Activated CD4-positive, alpha-beta memory T cell treated with anti-CD3 and anti-CD28 coated beads for 36 hours (primary cell): ENCODE measurements at regions of chr1 and their contacts with region 1.

Region 1: DNA sequence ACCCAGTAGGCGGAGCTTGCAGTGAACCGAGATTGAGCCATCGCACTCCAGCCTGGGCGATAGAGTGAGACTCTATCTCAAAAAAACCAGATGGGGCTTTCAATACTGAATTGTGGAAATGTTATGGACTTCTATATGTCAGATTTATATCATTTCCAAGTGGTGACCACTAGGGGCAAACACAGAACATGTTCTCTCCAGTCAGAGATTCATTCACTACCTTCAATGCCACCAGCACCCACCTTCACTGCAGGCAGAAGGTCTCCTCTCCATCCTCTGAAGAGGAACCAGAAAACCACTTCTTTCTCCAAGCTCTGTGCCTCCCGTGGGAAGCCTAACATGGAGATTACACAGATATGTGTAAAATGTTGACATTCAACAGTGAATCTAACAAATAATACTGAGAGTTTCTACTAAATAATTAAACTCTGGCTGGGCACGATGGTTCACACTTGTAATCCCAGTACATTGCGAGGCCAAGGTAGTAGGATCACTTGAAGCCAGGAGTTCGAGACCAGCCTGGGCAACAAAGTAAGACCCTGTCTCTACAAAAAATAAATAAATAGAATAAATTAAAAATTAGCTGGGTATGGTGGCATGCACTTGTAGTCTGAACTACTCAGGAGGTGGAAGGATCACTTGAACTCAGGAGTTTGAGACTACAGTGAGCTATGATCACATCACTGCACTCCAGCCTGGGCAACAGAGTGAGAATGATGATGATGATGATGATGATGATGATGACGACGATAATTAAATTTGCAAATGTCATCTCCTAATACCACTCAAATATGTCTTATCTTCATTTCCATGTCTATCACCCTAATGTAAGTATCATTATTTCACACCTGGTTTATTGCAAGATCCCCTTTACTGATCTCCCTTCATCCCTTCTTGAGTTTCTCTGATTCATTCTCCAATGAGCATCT is 151.1 kb downstream of the ZNF281 start:
- DNase-seq: no peak
- H3K4me3 Mint-ChIP-seq: no peak overlapping the region
- H3K27ac Mint-ChIP-seq: no peak overlapping the region
- H3K4me1 Mint-ChIP-seq: peaks cover 18% of the 10 kb centered on the region
- H3K27me3 Mint-ChIP-seq: peaks cover 9% of the 10 kb centered on the region

Region 2: GRCh38 chr1:200139661-200140250 is 119.0 kb before region 1 on chr1:
- CTCF ChIA-PET with region 1: no interaction called
- POLR2A ChIA-PET with region 1: no interaction called
- intact Hi-C with region 1: loop called (anchors 5 kb)
- DNase-seq: peak; percentile 27
- H3K4me3 Mint-ChIP-seq: no peak overlapping the region
- H3K27ac Mint-ChIP-seq: no peak overlapping the region
- H3K4me1 Mint-ChIP-seq: no peaks in the 10 kb centered on the region
- H3K27me3 Mint-ChIP-seq: no peaks in the 10 kb centered on the region

Region 3: DNA sequence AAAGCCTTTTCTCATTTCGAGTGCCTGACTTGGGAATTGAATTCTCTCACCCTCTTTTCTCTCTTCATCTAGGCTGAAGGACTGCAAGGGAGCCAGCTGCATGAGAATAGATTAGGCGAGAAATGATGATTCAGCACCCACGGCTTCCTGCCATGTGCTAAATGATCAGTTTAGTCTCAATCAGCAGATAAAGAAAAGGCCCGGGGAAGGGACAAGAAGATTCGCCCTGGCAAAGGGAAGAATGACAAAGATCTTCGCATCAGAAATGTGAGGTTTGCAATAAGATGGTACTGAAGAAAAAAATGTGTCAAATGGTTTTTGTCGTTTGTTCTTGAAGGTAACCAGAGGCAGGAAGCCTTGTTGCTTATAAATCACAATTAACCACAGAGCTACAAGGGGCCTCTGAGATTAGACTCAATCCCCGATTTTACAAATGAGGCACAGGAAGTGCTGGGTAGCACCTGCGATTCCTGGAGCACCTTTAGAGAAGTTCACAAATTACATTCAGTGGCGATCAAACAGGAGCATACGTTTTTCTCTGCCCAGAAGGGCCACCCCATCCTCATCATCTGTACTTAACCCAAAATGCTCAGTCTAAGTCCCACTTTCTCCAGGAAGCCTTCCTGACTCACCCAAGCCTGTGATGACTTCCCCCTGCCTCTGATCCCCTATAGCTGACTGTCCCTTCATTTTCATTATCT is 32.3 kb before region 1 on chr1:
- CTCF ChIA-PET with region 1: interaction called, 3 read pairs
- POLR2A ChIA-PET with region 1: no interaction called
- intact Hi-C with region 1: loop called (anchors 2 kb)
- DNase-seq: peak; percentile 61
- H3K4me3 Mint-ChIP-seq: no peak overlapping the region
- H3K27ac Mint-ChIP-seq: peak overlapping the region; percentile 35
- H3K4me1 Mint-ChIP-seq: peaks cover 22% of the 10 kb centered on the region
- H3K27me3 Mint-ChIP-seq: peaks cover 2% of the 10 kb centered on the region

Region 4: DNA sequence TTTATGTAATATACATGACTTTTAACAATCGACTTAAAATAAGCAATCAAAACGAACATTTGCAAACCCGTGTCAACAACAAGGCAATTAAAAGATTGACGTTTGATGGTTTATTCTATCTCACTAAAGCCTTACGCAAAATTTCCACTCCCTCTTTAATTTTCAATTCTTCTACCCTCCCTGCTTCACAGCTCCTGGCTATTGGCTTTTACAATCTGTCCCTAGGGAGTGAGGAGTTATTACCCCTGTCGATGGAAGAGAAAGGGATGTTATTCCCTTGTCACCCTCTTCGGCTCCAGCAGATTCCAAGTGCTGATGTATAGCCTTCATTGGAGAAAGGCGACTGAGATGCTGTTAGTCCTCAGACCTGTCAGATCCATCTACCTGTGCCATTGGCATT is 10.2 kb before region 1 on chr1:
- CTCF ChIA-PET with region 1: no interaction called
- POLR2A ChIA-PET with region 1: no interaction called
- intact Hi-C with region 1: no loop called
- DNase-seq: no peak
- H3K4me3 Mint-ChIP-seq: no peak overlapping the region
- H3K27ac Mint-ChIP-seq: no peak overlapping the region
- H3K4me1 Mint-ChIP-seq: peaks cover under 1% of the 10 kb centered on the region
- H3K27me3 Mint-ChIP-seq: peaks cover 13% of the 10 kb centered on the region

Region 5: GRCh38 chr1:200448034-200448762 is 189.5 kb after region 1 on chr1:
- CTCF ChIA-PET with region 1: no interaction called
- POLR2A ChIA-PET with region 1: no interaction called
- intact Hi-C with region 1: loop called (anchors 1 kb)
- DNase-seq: peak; percentile 24
- H3K4me3 Mint-ChIP-seq: peak overlapping the region; percentile 38
- H3K27ac Mint-ChIP-seq: peak overlapping the region; percentile 87
- H3K4me1 Mint-ChIP-seq: peaks cover 41% of the 10 kb centered on the region
- H3K27me3 Mint-ChIP-seq: no peaks in the 10 kb centered on the region